Caco-2 (cell line): ENCODE measurements at regions of chr4 and their contacts with region 1.

Region 1: DNA sequence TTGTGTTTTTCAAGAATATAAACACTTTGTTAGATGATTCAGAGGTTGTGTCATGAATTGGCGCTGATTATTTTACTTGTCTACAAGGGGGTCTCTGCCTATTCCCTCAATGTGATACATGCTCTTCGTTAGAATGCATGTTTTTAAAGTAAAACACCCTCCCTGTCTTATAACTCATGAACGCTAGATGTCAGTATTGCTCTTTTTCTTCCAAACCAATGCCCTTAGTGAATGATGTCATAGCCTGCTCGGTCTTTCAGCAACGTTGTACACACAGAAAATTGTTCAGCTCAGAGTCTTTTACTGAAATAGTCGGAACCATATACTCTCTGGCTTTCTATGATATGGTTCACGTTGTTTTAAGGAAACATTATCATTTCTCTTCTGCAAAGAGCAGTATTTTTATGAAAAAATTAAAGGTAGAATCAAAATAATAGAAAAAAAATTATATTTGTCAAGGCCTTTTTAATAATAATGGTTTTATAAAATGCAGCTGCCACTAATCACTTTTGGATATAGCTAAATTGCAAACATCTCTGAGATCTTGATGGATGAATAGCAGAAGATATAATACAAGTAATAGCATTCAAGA is 292.9 kb downstream of the TLL1 start:
- DNase-seq: peak; percentile 32 to 62
- H3K4me3 ChIP-seq: no peak overlapping the region
- H3K4me3 Mint-ChIP-seq: no peak overlapping the region
- H3K27ac Mint-ChIP-seq: no peak overlapping the region
- H3K4me1 ChIP-seq: no peaks in the 10 kb centered on the region
- H3K4me1 Mint-ChIP-seq: no peaks in the 10 kb centered on the region
- H3K27me3 ChIP-seq: no peaks in the 10 kb centered on the region
- H3K27me3 Mint-ChIP-seq: peaks cover 3% of the 10 kb centered on the region
- CTCF ChIP-seq: peak; percentile 62 to 66

Region 2: GRCh38 chr4:165893311-165893710 is 272.6 kb before region 1 on chr4:
- CTCF ChIA-PET with region 1: no interaction called
- POLR2A ChIA-PET with region 1: no interaction called
- intact Hi-C with region 1: no loop called
- DNase-seq: no peak
- H3K4me3 ChIP-seq: no peak overlapping the region
- H3K4me3 Mint-ChIP-seq: no peak overlapping the region
- H3K27ac Mint-ChIP-seq: no peak overlapping the region
- H3K4me1 ChIP-seq: no peaks in the 10 kb centered on the region
- H3K4me1 Mint-ChIP-seq: peaks cover 7% of the 10 kb centered on the region
- H3K27me3 ChIP-seq: no peaks in the 10 kb centered on the region
- H3K27me3 Mint-ChIP-seq: no peaks in the 10 kb centered on the region
- CTCF ChIP-seq: no peak

Region 3: DNA sequence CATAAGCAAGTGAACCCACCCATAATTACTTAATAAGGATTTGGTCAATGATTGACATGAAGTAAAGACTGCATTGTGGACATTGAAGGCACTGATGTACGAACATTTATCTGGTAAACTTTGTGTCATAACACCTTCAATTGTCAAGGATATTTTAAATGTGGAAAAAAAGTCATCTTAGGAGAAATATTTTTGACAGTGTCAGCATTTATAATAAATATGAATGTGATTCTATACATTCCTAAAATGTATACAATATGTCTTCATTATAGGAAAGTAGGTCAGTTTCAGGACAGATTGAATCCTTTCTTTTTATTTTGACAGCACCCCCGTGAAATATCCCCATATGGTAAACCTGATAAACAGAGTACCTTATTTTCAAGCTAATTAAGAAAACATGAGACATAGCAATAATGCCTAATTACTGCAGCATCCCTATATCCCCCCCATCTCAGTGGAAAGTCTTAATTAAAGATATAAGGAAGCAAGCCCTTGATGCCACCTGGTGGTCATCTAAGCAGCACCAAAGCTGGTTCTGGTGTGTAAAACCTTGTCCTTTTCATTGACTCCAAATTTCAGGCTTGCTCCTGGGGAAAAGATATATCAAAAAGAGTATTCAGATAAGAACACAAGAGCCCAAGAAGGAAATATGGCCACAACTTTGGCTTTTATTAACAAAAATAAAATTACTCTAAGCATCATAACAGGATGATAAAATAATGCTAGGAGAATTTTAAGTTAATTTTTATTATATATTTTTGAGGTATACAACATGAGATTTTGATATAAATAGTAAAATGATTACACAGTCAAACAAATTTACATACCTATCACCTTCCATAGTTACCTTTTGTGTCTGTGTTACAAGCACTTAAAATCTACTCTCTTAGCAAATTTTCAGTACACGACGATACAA is 86.8 kb after region 1 on chr4:
- CTCF ChIA-PET with region 1: no interaction called
- POLR2A ChIA-PET with region 1: no interaction called
- intact Hi-C with region 1: loop called (anchors 1 kb)
- DNase-seq: peak; percentile 30 to 32
- H3K4me3 ChIP-seq: no peak overlapping the region
- H3K4me3 Mint-ChIP-seq: no peak overlapping the region
- H3K27ac Mint-ChIP-seq: no peak overlapping the region
- H3K4me1 ChIP-seq: no peaks in the 10 kb centered on the region
- H3K4me1 Mint-ChIP-seq: no peaks in the 10 kb centered on the region
- H3K27me3 ChIP-seq: no peaks in the 10 kb centered on the region
- H3K27me3 Mint-ChIP-seq: no peaks in the 10 kb centered on the region
- CTCF ChIP-seq: peak; percentile 54 to 69

Region 4: GRCh38 chr4:166324321-166324720 is 158.4 kb after region 1 on chr4:
- CTCF ChIA-PET with region 1: no interaction called
- POLR2A ChIA-PET with region 1: no interaction called
- intact Hi-C with region 1: loop called (anchors 1 kb)
- DNase-seq: peak; percentile 62 to 64
- H3K4me3 ChIP-seq: no peak overlapping the region
- H3K4me3 Mint-ChIP-seq: no peak overlapping the region
- H3K27ac Mint-ChIP-seq: no peak overlapping the region
- H3K4me1 ChIP-seq: no peaks in the 10 kb centered on the region
- H3K4me1 Mint-ChIP-seq: no peaks in the 10 kb centered on the region
- H3K27me3 ChIP-seq: no peaks in the 10 kb centered on the region
- H3K27me3 Mint-ChIP-seq: no peaks in the 10 kb centered on the region
- CTCF ChIP-seq: peak; percentile 63 to 77

Region 5: GRCh38 chr4:166594326-166594946 is 428.5 kb after region 1 on chr4:
- CTCF ChIA-PET with region 1: interaction called, 3 read pairs
- POLR2A ChIA-PET with region 1: no interaction called
- intact Hi-C with region 1: loop called (anchors 1 kb)
- DNase-seq: peak; percentile 52 to 55
- H3K4me3 ChIP-seq: no peak overlapping the region
- H3K4me3 Mint-ChIP-seq: no peak overlapping the region
- H3K27ac Mint-ChIP-seq: no peak overlapping the region
- H3K4me1 ChIP-seq: no peaks in the 10 kb centered on the region
- H3K4me1 Mint-ChIP-seq: no peaks in the 10 kb centered on the region
- H3K27me3 ChIP-seq: no peaks in the 10 kb centered on the region
- H3K27me3 Mint-ChIP-seq: no peaks in the 10 kb centered on the region
- CTCF ChIP-seq: peak; percentile 68 to 81

Region 6: GRCh38 chr4:167622481-167623246 is 1456.7 kb after region 1 on chr4:
- CTCF ChIA-PET with region 1: no interaction called
- POLR2A ChIA-PET with region 1: no interaction called
- intact Hi-C with region 1: loop called (anchors 5 kb)
- DNase-seq: peak; percentile 47 to 63
- H3K4me3 ChIP-seq: no peak overlapping the region
- H3K4me3 Mint-ChIP-seq: no peak overlapping the region
- H3K27ac Mint-ChIP-seq: no peak overlapping the region
- H3K4me1 ChIP-seq: no peaks in the 10 kb centered on the region
- H3K4me1 Mint-ChIP-seq: peaks cover 6% of the 10 kb centered on the region
- H3K27me3 ChIP-seq: no peaks in the 10 kb centered on the region
- H3K27me3 Mint-ChIP-seq: peaks cover 2% of the 10 kb centered on the region
- CTCF ChIP-seq: peak; percentile 63 to 82